Ovary (tissue), 10 donors: ENCODE measurements at regions of chr3 and their contacts with region 1.

Region 1: GRCh38 chr3:38117748-38118420 is 19.0 kb downstream of the ACAA1 start:
- DNase-seq: peak in 3 of 5 donors; percentile 44 to 67 (median 46)
- H3K4me3 ChIP-seq: no peak overlapping the region
- H3K27ac ChIP-seq: no peak overlapping the region
- H3K4me1 ChIP-seq: no peaks in the 10 kb centered on the region
- H3K27me3 ChIP-seq: no peaks in the 10 kb centered on the region
- CTCF ChIP-seq: peak in 1 of 3 donors; percentile 26
- EP300 ChIP-seq: no peak
- POLR2A ChIP-seq: no peak

Region 2: DNA sequence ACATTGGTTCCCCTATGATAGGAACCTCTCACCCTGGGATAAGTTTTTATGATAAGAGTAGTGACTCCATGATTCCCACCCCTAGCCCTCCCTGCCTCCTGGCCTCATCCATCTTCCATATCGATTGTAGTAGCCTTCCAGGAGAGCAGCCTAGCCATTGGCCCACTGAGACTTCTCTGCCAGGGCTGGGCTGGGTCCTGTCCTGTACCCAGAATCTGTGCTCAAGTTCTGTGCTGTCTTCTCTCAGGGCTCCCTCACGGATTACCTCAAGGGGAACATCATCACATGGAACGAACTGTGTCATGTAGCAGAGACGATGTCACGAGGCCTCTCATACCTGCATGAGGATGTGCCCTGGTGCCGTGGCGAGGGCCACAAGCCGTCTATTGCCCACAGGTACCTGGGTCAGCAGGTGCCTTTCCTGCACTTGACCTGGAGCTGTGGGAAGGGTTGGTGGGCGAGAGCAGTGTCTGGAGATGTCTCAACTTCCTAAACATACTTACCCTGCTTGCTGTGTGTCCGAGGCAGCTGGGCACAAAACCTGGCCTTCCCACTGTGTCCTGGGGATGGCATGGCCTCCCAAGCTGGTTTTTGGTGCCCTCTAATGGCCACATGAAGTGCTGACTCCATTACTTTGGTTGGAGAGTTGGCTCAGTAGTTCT is 361.7 kb after region 1 on chr3:
- intact Hi-C with region 1: loop called in 1 of 4 experiments (anchors 10 kb)
- DNase-seq: peak; percentile 57 to 69 (median 64)
- H3K4me3 ChIP-seq: no peak overlapping the region
- H3K27ac ChIP-seq: no peak overlapping the region
- H3K4me1 ChIP-seq: peaks cover 2% of the 10 kb centered on the region
- H3K27me3 ChIP-seq: no peaks in the 10 kb centered on the region
- CTCF ChIP-seq: peak; percentile 67 to 79 (median 69)
- EP300 ChIP-seq: no peak
- POLR2A ChIP-seq: no peak